A673 (cell line): ENCODE measurements at regions of chr6 and their contacts with region 1.

Region 1: GRCh38 chr6:159174263-159174969 is 5.2 kb downstream of the FNDC1 start:
- DNase-seq: peak; percentile 78
- H3K4me3 ChIP-seq: no peak overlapping the region
- H3K27ac ChIP-seq: no peak overlapping the region
- H3K4me1 ChIP-seq: no peaks in the 10 kb centered on the region
- H3K27me3 ChIP-seq: peaks cover 58% of the 10 kb centered on the region
- CTCF ChIP-seq: peak; percentile 97

Region 2: DNA sequence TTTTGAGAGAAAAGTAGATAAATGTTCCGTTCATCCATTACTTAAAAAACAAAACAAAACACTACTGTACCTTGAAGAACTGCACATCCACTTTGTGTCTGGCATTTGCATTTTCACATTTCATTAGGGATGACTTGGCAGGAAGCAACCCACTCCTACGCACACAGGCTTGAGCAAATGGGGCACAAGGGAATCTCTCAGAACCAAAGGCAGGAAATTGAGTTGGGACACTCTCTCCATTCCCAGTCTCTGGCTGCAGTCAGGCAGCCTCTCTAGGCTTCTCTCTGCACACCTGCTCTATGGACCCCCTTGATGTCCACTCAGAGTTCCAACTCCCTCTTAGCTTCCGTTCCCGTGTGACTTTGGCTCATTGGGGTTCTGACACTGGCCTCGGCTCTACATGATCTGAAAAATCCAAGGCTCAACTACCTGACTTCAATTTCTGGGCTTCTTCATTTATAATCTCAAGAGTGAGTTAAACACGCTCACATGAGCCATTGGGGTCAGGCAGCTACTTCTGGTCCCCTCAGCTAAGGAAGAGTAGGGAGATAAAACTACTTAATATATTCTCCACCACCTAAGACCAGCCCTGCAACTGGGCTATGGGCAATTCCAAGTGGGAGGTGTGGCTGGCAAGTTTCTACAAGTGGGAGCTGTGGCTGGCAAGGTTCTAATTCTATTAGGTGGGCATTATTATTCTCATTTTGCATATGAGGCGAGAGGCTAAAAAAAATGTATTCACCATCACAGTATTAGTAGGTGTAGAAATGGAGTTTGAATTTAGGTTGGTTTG is 266.7 kb after region 1 on chr6:
- CTCF ChIA-PET with region 1: no interaction called
- POLR2A ChIA-PET with region 1: no interaction called
- intact Hi-C with region 1: no loop called
- DNase-seq: peak; percentile 62
- H3K4me3 ChIP-seq: no peak overlapping the region
- H3K27ac ChIP-seq: no peak overlapping the region
- H3K4me1 ChIP-seq: no peaks in the 10 kb centered on the region
- H3K27me3 ChIP-seq: no peaks in the 10 kb centered on the region
- CTCF ChIP-seq: no peak

Region 3: DNA sequence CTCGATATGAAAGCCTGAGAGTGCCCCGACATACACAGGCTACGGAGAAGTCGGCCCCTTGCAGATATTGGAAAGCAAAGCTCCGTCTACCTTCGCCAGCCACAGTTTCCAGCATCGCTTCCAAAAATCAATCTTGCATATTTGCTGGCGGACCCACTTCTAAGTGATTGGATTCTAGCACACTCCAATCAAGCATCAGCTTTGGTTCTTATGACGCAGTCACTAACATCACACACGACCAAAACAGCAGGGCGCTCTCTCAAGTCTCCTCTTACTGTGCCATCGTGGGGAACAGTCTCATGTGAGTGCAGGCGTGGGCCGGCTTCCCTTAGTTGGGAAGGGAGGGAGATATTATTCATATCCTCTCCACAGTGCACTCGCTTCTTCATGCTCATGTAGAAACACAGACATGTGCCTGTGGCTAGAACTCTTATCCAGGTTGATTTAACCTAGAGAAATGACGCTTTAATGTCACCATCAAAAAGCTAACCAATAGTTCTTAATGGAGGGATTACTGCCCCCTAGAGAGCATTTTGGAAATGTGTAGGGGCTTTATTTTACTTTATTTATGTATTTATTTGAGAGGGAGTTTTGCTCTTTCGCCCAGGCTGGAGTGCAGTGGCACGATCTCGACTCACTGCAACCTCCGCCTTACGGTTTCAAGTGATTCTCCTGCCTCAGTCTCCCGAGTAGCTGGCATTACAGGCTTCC is 288.9 kb after region 1 on chr6:
- CTCF ChIA-PET with region 1: no interaction called
- POLR2A ChIA-PET with region 1: no interaction called
- intact Hi-C with region 1: loop called (anchors 1 kb)
- DNase-seq: peak; percentile 51
- H3K4me3 ChIP-seq: no peak overlapping the region
- H3K27ac ChIP-seq: no peak overlapping the region
- H3K4me1 ChIP-seq: no peaks in the 10 kb centered on the region
- H3K27me3 ChIP-seq: no peaks in the 10 kb centered on the region
- CTCF ChIP-seq: peak; percentile 53

Region 4: DNA sequence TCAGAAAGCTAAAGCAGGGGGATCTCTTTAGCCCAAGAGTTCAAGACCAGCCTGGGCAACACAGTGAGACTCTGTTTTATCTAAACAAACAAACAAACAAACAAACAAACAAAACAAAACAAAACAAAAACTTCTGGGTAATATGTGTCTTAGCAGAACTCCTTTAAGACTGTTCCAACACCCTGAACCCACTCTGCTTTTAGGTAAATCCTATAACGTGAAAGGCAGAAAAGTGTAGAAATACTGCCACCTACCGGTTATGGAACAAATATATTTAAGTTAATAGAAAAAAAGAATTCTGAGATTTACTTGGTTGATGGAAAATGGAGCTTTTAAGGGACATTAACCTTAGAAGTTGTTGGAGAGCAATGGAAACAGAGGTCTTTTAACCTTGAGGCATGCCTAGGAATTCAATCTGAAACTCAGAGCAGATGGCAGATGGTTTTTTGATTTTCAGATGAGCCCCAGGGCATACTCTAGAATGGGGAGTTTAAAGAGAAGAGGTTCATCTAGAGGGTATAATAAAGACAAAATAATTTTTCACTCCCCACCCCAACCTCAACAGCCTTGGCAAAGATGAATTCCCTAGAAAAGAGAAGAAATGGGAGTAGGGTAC is 480.2 kb after region 1 on chr6:
- CTCF ChIA-PET with region 1: no interaction called
- POLR2A ChIA-PET with region 1: no interaction called
- intact Hi-C with region 1: loop called (anchors 1 kb)
- DNase-seq: peak; percentile 80
- H3K4me3 ChIP-seq: no peak overlapping the region
- H3K27ac ChIP-seq: no peak overlapping the region
- H3K4me1 ChIP-seq: no peaks in the 10 kb centered on the region
- H3K27me3 ChIP-seq: no peaks in the 10 kb centered on the region
- CTCF ChIP-seq: peak; percentile 66

Region 5: GRCh38 chr6:159665868-159666635 is 491.6 kb after region 1 on chr6:
- CTCF ChIA-PET with region 1: no interaction called
- POLR2A ChIA-PET with region 1: no interaction called
- intact Hi-C with region 1: no loop called
- DNase-seq: no peak
- H3K4me3 ChIP-seq: no peak overlapping the region
- H3K27ac ChIP-seq: no peak overlapping the region
- H3K4me1 ChIP-seq: no peaks in the 10 kb centered on the region
- H3K27me3 ChIP-seq: no peaks in the 10 kb centered on the region
- CTCF ChIP-seq: no peak

Region 6: DNA sequence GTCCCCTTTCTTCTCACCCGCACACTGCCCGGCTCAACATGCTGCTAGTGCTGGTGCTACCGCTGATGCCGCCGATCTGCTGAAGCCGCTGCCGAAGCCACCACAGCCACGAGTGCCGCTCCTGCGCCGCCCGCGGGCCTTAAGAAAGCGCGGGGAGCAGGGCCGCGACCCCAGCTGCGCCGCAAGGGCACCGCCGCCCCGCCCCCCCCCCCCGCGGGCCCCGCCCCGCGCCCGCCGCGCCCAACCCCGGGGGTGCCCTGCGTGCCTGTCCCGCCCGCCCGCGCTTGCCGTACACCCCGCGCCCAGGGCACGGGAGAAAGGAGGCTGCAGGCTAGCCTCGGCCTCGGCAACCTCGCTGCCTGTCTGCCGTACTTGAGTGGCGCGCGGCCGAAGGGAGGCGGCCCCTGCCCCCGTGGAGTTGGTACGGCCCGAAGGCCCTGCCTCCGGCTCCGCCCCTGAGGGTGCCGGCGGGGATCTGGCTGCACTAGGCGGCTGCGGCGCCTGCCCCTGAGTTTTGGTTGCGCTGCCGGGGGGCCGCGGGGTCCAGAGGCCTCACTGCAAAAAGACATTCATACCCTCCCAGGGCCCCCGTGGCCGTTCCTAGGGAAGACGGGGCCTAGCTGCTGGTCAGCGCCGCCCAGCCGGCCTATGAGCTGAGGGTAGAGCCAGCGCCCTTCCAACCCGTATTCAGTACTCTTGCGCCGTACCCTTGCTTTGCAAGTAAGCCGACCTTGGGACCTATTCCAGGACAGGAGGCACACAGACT is 518.9 kb after region 1 on chr6 and contains the start of gene SOD2:
- CTCF ChIA-PET with region 1: no interaction called
- POLR2A ChIA-PET with region 1: no interaction called
- intact Hi-C with region 1: no loop called
- DNase-seq: peak; percentile 87
- H3K4me3 ChIP-seq: peak within 1 kb of the TSS; percentile 97
- H3K27ac ChIP-seq: peak within 1 kb of the TSS; percentile 93
- H3K4me1 ChIP-seq: peaks cover 9% of the 10 kb centered on the region
- H3K27me3 ChIP-seq: no peaks in the 10 kb centered on the region
- CTCF ChIP-seq: no peak
- total RNA-seq, gene SOD2: 139 and 159 TPM in 2 replicates

Region 7: DNA sequence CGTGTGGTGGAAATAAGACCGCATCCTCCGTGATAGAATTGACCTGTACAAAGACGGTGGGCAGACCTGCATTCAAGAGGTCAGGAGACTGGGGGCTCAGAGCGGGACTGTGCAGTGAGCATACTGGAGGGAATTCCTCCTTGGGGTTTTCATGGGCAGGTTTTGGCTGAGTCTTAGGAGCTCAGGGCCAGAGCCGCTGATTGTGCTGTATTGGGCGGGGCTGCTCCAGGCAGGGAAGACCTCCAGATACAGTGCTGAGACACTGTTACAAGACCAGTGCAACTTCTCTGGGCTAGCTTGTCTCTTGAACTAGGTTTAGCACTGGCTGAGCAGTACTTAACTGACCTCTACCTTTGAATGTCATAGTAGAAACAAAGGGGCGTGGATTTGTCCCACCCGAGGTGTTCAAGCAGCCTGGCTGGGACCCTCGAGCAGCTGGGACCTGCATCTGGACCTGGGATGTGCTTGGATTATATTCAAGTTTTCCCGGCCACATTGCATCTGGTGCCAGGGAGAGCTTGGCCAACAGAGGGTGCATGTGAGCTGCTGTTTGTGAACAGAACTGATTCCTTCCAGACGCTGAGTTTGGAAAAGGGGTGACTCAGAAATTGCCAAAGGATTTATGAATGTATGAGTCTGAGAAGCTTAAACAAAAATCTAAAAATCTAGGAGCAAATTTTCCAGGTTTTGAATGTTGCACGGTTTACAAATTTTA is 913.8 kb after region 1 on chr6:
- CTCF ChIA-PET with region 1: no interaction called
- POLR2A ChIA-PET with region 1: no interaction called
- intact Hi-C with region 1: loop called (anchors 5 kb)
- DNase-seq: peak; percentile 52
- H3K4me3 ChIP-seq: no peak overlapping the region
- H3K27ac ChIP-seq: no peak overlapping the region
- H3K4me1 ChIP-seq: no peaks in the 10 kb centered on the region
- H3K27me3 ChIP-seq: no peaks in the 10 kb centered on the region
- CTCF ChIP-seq: peak; percentile 68